ENCODE measurements at regions of chr10 and their contacts with region 1.

Region 1: DNA sequence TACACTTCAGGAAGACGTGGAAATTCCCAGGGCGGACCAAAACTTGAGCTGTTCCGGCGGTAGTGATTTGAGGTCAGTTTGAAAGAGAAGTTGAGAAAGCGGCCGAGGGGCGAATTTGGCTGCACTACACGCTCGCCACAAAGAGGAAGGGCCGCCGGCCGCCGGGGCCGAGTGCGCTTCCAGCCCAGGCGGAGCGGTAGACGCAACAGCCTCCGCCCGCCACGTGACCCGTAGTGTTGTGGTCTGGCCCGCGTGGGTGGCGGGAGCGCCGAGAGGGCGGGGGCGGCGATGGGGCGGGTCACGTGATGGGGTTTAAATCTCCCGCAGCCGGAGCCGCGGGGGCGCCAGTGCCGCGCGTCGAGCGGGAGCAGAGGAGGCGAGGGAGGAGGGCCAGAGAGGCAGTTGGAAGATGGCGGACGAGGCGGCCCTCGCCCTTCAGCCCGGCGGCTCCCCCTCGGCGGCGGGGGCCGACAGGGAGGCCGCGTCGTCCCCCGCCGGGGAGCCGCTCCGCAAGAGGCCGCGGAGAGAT is at the start of gene SIRT1:
- DNase-seq: peak; percentile 97 to 99 (median 98)
- ATAC-seq: peak; percentile 95 to 97 (median 96)
- H3K4me3 ChIP-seq: peak within 1 kb of the TSS; percentile 58 to 98 (median 82)
- H3K27ac ChIP-seq: peak within 1 kb of the TSS; percentile 84 to 98 (median 94)
- H3K4me1 ChIP-seq: peaks cover 0 to 30% (median 13%) of the 10 kb centered on the region in 12 donors
- H3K27me3 ChIP-seq: no peaks in the 10 kb centered on the region
- CTCF ChIP-seq: peak in 3 of 12 donors; percentile 9 to 25 (median 10)
- POLR2A ChIP-seq: peak; percentile 43 to 96
- total RNA-seq, gene SIRT1: 9.4 to 19.1 (median 12.5) TPM

Region 2: DNA sequence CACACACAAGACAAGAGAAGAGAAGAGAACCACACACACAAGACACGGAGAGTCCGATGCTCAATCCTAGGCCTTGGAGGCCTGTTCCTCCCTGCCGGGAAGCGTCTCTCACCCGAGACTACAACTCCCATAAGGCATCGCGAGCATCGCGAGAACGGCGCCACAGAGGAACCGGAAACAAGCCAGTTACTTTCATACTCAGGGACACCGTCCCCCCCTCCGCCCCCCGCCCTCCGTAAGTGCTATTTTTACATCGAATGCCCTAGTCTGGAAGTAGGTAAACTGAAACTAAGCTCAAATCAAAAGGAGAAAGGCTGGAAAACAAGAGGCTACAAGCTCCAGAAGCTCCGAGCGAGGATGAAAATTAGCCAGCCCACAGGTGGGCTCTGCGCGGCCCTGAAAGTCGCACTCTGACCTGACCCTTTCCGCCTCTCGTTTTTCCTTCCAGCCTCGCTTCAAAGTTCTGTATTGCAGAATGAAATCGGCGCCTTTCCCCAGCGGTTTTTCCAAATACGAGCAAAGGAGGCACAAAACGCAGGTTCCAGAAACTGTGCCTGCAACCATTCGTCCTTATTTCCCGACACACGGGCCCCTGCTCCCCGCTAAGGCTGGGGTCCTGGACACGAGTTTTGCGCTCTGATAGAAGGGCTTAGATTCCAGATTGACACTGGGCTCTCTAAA is 34.9 kb before region 1 on chr10:
- intact Hi-C with region 1: loop called in 2 of 10 experiments (anchors 1 to 2 kb)
- DNase-seq: peak; percentile 95 to 98 (median 96)
- ATAC-seq: peak; percentile 98 to 99 (median 99)
- H3K4me3 ChIP-seq: peak overlapping the region; percentile 55 to 99 (median 80)
- H3K27ac ChIP-seq: peak overlapping the region; percentile 89 to 99 (median 95)
- H3K4me1 ChIP-seq: peaks cover 0 to 8% (median 5%) of the 10 kb centered on the region in 12 donors
- H3K27me3 ChIP-seq: no peaks in the 10 kb centered on the region
- CTCF ChIP-seq: peak in 1 of 12 donors; percentile 34
- POLR2A ChIP-seq: peak in 1 of 2 donors; percentile 53

Region 3: GRCh38 chr10:68023292-68023691 is 138.9 kb after region 1 on chr10:
- intact Hi-C with region 1: no loop called
- DNase-seq: no peak
- ATAC-seq: no peak
- H3K4me3 ChIP-seq: no peak overlapping the region
- H3K27ac ChIP-seq: no peak overlapping the region
- H3K4me1 ChIP-seq: no peaks in the 10 kb centered on the region
- H3K27me3 ChIP-seq: no peaks in the 10 kb centered on the region
- CTCF ChIP-seq: no peak
- POLR2A ChIP-seq: no peak

Region 4: GRCh38 chr10:68331455-68332258 is 447.3 kb after region 1 on chr10 and contains the start of gene HNRNPH3:
- intact Hi-C with region 1: loop called in 4 of 10 experiments (anchors 2 to 10 kb)
- DNase-seq: peak; percentile 98 to 99 (median 99)
- ATAC-seq: peak; percentile 85 to 94 (median 92)
- H3K4me3 ChIP-seq: peak within 1 kb of the TSS; percentile 70 to 98 (median 90)
- H3K27ac ChIP-seq: peak within 1 kb of the TSS; percentile 95 to 100 (median 99)
- H3K4me1 ChIP-seq: peaks cover 7 to 64% (median 36%) of the 10 kb centered on the region in 12 donors
- H3K27me3 ChIP-seq: no peaks in the 10 kb centered on the region
- CTCF ChIP-seq: peak in 4 of 12 donors; percentile 6 to 16 (median 14)
- POLR2A ChIP-seq: peak; percentile 74 to 99
- total RNA-seq, gene HNRNPH3: 23.7 to 130 (median 83.1) TPM

Region 5: DNA sequence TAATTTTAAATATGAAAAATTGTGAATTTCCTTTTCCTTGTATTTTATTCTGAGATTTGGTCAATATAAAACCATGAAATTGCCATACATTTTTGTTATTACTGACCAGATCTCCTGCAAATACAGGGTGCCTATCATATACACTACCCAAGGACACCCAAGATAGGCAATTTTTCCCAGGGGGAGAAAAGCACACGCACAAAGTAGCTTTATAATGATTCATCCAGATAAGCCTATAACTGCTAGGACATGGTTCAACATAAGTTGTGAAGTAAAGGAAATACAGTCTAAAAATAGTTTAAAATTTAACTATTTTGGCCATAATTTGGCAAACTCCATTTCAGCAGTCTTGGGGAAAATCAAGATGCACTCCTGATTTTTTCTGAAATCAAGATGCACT is 517.9 kb after region 1 on chr10:
- intact Hi-C with region 1: no loop called
- DNase-seq: no peak
- ATAC-seq: no peak
- H3K4me3 ChIP-seq: no peak overlapping the region
- H3K27ac ChIP-seq: no peak overlapping the region
- H3K4me1 ChIP-seq: peaks cover 0 to 26% (median 6%) of the 10 kb centered on the region in 12 donors
- H3K27me3 ChIP-seq: no peaks in the 10 kb centered on the region
- CTCF ChIP-seq: no peak
- POLR2A ChIP-seq: no peak

Measured in heart left ventricle (tissue), 16 donors.